K562 (cell line): ENCODE measurements at regions of chr3 and their contacts with region 1.

Region 1: DNA sequence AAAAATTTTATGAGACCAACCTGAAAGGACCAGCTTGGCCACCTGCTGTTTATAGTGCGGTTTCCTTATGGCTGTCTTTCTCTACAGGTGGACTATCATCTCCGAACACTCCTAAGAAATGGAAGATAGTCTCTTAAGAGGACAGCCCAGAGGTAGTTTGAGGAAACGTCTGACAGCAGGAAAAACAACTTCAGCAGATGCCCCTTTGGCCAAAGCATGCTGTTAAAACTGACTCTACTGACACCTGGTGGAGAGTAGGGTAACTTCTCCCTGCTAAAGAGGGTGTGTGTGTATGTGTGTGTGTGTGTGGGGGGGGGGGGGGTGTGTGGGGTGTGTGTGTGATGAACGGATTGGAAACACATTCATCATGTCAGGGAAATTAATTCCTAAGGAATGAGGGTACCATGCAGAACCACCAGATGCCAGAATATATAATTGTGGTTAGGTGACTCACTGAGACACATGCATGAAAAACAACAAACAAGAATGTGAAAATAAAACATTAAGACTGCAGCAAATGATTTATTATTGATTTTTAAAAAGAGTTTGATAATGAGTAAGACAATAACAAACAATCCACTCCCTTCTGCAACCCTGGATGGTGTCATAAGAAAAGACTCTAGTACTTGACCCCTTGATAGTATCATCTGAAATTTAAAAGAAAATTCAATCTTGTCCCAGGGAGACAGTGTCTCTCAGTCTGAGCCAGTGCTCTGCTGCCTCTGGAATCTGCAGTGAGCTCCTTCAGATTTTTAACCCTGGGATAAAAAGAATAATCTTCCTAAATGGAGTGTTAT is 256.5 kb downstream of the THRB start:
- DNase-seq: peak; percentile 76 to 85 (median 79)
- ATAC-seq: peak; percentile 96
- H3K4me3 ChIP-seq: no peak overlapping the region
- H3K27ac ChIP-seq: no peak overlapping the region
- H3K4me1 ChIP-seq: no peaks in the 10 kb centered on the region
- H3K27me3 ChIP-seq: no peaks in the 10 kb centered on the region
- CTCF ChIP-seq: peak; percentile 78 to 88 (median 84)
- EP300 ChIP-seq: no peak
- POLR2A ChIP-seq: no peak
- RAD21 ChIP-seq: peak; percentile 83 to 84

Region 2: GRCh38 chr3:23999012-23999641 is 239.0 kb before region 1 on chr3:
- CTCF ChIA-PET with region 1: interaction called, 9 read pairs
- POLR2A ChIA-PET with region 1: no interaction called
- in situ Hi-C with region 1: loop called (anchors 10 kb)
- intact Hi-C with region 1: loop called (anchors 1 kb)
- DNase-seq: peak; percentile 55 to 78 (median 58)
- ATAC-seq: peak; percentile 73
- H3K4me3 ChIP-seq: no peak overlapping the region
- H3K27ac ChIP-seq: no peak overlapping the region
- H3K4me1 ChIP-seq: no peaks in the 10 kb centered on the region
- H3K27me3 ChIP-seq: peaks cover 4 to 11% of the 10 kb centered on the region in 2 experiments; a peak in 3 of 5 replicates
- CTCF ChIP-seq: peak; percentile 90 to 98 (median 96)
- EP300 ChIP-seq: no peak
- POLR2A ChIP-seq: no peak
- RAD21 ChIP-seq: peak; percentile 99

Region 3: GRCh38 chr3:24069045-24069444 is 169.1 kb before region 1 on chr3:
- CTCF ChIA-PET with region 1: interaction called, 11 read pairs
- POLR2A ChIA-PET with region 1: no interaction called
- in situ Hi-C with region 1: no loop called
- intact Hi-C with region 1: loop called (anchors 1 kb)
- DNase-seq: peak in 1 of 4 experiments; percentile 29
- ATAC-seq: peak; percentile 78
- H3K4me3 ChIP-seq: no peak overlapping the region
- H3K27ac ChIP-seq: no peak overlapping the region
- H3K4me1 ChIP-seq: peaks cover 0 to 2% of the 10 kb centered on the region in 2 experiments; a peak in 1 of 5 replicates
- H3K27me3 ChIP-seq: no peaks in the 10 kb centered on the region; a peak in 2 of 5 replicates
- CTCF ChIP-seq: peak; percentile 49 to 74 (median 57); a peak in 4 of 6 replicates
- EP300 ChIP-seq: no peak
- POLR2A ChIP-seq: no peak
- RAD21 ChIP-seq: peak; percentile 50 to 78

Region 4: GRCh38 chr3:24088782-24089181 is 149.4 kb before region 1 on chr3:
- CTCF ChIA-PET with region 1: no interaction called
- POLR2A ChIA-PET with region 1: no interaction called
- in situ Hi-C with region 1: no loop called
- intact Hi-C with region 1: loop called (anchors 5 kb)
- DNase-seq: peak; percentile 27 to 68 (median 64)
- ATAC-seq: peak; percentile 96
- H3K4me3 ChIP-seq: no peak overlapping the region
- H3K27ac ChIP-seq: no peak overlapping the region
- H3K4me1 ChIP-seq: no peaks in the 10 kb centered on the region
- H3K27me3 ChIP-seq: peaks cover 8 to 11% of the 10 kb centered on the region in 2 experiments
- CTCF ChIP-seq: peak; percentile 56 to 65 (median 58); a peak in 5 of 6 replicates
- EP300 ChIP-seq: no peak
- POLR2A ChIP-seq: no peak
- RAD21 ChIP-seq: peak; percentile 21 to 66; a peak in 3 of 4 replicates

Region 5: GRCh38 chr3:24185738-24186384 is 52.3 kb before region 1 on chr3:
- CTCF ChIA-PET with region 1: interaction called, 5 read pairs
- POLR2A ChIA-PET with region 1: no interaction called
- in situ Hi-C with region 1: no loop called
- intact Hi-C with region 1: loop called (anchors 1 kb)
- DNase-seq: peak; percentile 88 to 94 (median 90)
- ATAC-seq: peak; percentile 98
- H3K4me3 ChIP-seq: no peak overlapping the region
- H3K27ac ChIP-seq: peak overlapping the region; percentile 76
- H3K4me1 ChIP-seq: peaks cover 4 to 8% of the 10 kb centered on the region in 2 experiments; a peak in 3 of 5 replicates
- H3K27me3 ChIP-seq: no peaks in the 10 kb centered on the region
- CTCF ChIP-seq: peak; percentile 92 to 93 (median 92)
- EP300 ChIP-seq: peak; percentile 87
- POLR2A ChIP-seq: no peak
- RAD21 ChIP-seq: peak; percentile 61 to 84